CD8-positive, alpha-beta memory T cell (primary cell): ENCODE measurements at regions of chr16 and their contacts with region 1.

Region 1: DNA sequence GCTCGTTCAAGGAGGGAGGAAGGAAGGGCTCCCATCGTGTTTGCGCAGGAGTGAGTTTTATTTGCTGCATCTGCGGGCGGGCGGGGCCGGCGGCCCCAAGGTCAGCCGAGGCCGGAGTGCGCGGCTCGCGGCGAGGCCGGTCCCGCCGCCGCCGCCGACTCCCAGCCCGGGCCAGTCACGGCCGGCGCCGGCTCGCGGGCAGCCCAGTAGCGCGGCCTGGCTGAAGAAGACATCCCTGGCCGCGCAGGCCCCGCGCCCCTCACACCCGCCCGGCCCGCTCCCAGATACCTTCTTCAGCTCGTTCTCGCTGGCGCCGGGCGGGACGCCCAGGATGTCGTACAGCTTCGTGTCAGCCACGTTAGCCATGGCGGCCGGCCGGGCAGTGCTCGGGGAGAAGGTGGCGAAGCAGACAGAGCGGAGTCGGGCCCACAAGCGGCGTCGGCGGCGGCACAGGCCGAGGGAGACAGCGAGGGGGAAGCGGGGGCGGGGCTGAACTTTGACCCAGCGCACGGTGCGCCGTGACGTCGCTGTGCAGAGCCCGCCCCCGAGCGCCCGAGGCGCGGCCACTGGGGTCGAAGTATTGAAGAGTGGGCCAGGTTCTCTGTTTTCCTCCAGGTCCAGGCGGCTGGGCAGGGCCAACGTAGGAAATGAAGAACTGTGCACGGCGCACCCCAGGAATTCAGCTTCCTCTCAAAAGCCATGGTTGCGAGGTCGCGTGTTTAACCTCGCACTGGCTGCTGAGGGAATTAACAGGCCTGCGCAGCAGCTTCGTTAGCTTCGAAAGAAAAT is at the start of gene DNAJA2:
- DNase-seq: peak; percentile 89 to 93 (median 92)
- H3K4me3 ChIP-seq: peak within 1 kb of the TSS; percentile 83
- H3K4me3 Mint-ChIP-seq: peak within 1 kb of the TSS; percentile 83 to 99 (median 92)
- H3K27ac ChIP-seq: peak within 1 kb of the TSS; percentile 87
- H3K27ac Mint-ChIP-seq: peak within 1 kb of the TSS; percentile 89 to 100 (median 99)
- H3K4me1 ChIP-seq: peaks cover 40% of the 10 kb centered on the region
- H3K4me1 Mint-ChIP-seq: peaks cover 52 to 65% (median 63%) of the 10 kb centered on the region in 3 donors
- H3K27me3 ChIP-seq: no peaks in the 10 kb centered on the region
- H3K27me3 Mint-ChIP-seq: peaks cover 0 to 1% of the 10 kb centered on the region in 2 donors
- total RNA-seq, gene DNAJA2: 89.8 to 90.3 TPM

Region 2: DNA sequence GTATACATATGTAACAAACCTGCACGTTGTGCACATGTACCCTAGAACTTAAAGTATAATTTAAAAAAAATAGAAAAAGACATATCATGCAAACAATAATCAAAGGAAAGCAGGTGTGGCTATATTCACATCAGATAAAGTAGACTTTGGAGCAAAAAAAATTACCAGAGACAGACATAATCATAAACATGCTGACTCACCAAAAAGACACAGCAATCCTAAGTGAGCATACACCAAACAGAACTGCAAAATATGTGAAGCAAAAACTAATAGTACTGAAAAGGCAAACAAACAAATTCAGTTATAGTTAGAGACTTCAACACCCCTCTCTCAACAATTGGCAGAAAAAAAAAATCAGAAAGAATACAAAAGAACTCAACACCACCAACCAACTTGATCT is 382.1 kb before region 1 on chr16:
- CTCF ChIA-PET with region 1: no interaction called
- POLR2A ChIA-PET with region 1: no interaction called
- DNase-seq: no peak
- H3K4me3 ChIP-seq: no peak overlapping the region
- H3K4me3 Mint-ChIP-seq: no peak overlapping the region
- H3K27ac ChIP-seq: no peak overlapping the region
- H3K27ac Mint-ChIP-seq: no peak overlapping the region
- H3K4me1 ChIP-seq: no peaks in the 10 kb centered on the region
- H3K4me1 Mint-ChIP-seq: no peaks in the 10 kb centered on the region
- H3K27me3 ChIP-seq: no peaks in the 10 kb centered on the region
- H3K27me3 Mint-ChIP-seq: no peaks in the 10 kb centered on the region

Region 3: DNA sequence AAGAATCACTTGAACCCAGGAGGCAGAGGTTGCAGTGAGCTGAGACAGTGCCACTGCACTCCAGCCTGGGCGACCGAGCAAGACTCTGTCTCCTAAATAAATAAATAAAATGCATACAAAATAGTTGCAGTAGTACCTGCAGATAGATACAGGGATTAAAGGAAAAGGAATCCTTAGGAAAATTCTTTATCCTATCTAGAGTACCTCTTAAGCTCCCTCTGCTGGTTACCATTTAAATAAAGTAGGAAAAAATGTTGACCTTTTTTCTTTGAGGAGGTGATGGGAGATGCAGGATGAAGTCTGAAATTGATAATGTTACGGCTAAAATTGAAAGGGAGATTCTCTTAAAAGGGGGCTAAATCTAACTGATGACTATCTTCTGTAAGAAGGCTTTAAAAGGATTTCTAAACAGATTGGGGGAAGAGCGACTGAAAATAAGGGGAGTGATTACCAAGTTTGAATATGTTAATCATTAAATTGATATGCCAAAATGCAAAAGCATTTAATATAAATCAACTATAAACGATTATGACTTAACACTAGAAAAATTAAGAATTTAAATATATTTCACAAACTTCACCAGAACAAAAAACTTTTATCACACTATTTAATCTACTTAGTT is 171.9 kb before region 1 on chr16:
- CTCF ChIA-PET with region 1: no interaction called
- POLR2A ChIA-PET with region 1: no interaction called
- DNase-seq: no peak
- H3K4me3 ChIP-seq: no peak overlapping the region
- H3K4me3 Mint-ChIP-seq: no peak overlapping the region
- H3K27ac ChIP-seq: no peak overlapping the region
- H3K27ac Mint-ChIP-seq: peak overlapping the region in 1 of 8 donors; percentile 52
- H3K4me1 ChIP-seq: no peaks in the 10 kb centered on the region
- H3K4me1 Mint-ChIP-seq: peaks cover 0 to 25% (median 6%) of the 10 kb centered on the region in 3 donors
- H3K27me3 ChIP-seq: no peaks in the 10 kb centered on the region
- H3K27me3 Mint-ChIP-seq: no peaks in the 10 kb centered on the region

Region 4: GRCh38 chr16:46961373-46962353 is 11.7 kb before region 1 on chr16:
- CTCF ChIA-PET with region 1: interaction called, 8 read pairs
- POLR2A ChIA-PET with region 1: interaction called, 12 read pairs
- DNase-seq: peak in 4 of 5 donors; percentile 5 to 60 (median 52)
- H3K4me3 ChIP-seq: no peak overlapping the region
- H3K4me3 Mint-ChIP-seq: peak overlapping the region in 5 of 7 donors; percentile 24 to 57 (median 49)
- H3K27ac ChIP-seq: peak overlapping the region; percentile 17
- H3K27ac Mint-ChIP-seq: peak overlapping the region; percentile 31 to 95 (median 87)
- H3K4me1 ChIP-seq: peaks cover 6% of the 10 kb centered on the region
- H3K4me1 Mint-ChIP-seq: peaks cover 34 to 48% (median 38%) of the 10 kb centered on the region in 3 donors
- H3K27me3 ChIP-seq: no peaks in the 10 kb centered on the region
- H3K27me3 Mint-ChIP-seq: no peaks in the 10 kb centered on the region

Region 5: GRCh38 chr16:47460711-47461597 is 487.6 kb after region 1 on chr16 and contains the starts of genes ITFG1 and PHKB:
- CTCF ChIA-PET with region 1: no interaction called
- POLR2A ChIA-PET with region 1: interaction called, 10 read pairs
- DNase-seq: peak; percentile 94 to 97 (median 95)
- H3K4me3 ChIP-seq: peak within 1 kb of the TSS; percentile 88
- H3K4me3 Mint-ChIP-seq: peak within 1 kb of the TSS; percentile 94 to 100 (median 97)
- H3K27ac ChIP-seq: peak within 1 kb of the TSS; percentile 93
- H3K27ac Mint-ChIP-seq: peak within 1 kb of the TSS; percentile 95 to 99 (median 98)
- H3K4me1 ChIP-seq: peaks cover 33% of the 10 kb centered on the region
- H3K4me1 Mint-ChIP-seq: peaks cover 64 to 80% (median 78%) of the 10 kb centered on the region in 3 donors
- H3K27me3 ChIP-seq: no peaks in the 10 kb centered on the region
- H3K27me3 Mint-ChIP-seq: no peaks in the 10 kb centered on the region
- total RNA-seq, gene ITFG1: 24.9 to 26.8 TPM
- total RNA-seq, gene PHKB: 23.0 to 25.4 TPM